GM13977 (cell line): ENCODE measurements at regions of chr12 and their contacts with region 1.

Region 1: DNA sequence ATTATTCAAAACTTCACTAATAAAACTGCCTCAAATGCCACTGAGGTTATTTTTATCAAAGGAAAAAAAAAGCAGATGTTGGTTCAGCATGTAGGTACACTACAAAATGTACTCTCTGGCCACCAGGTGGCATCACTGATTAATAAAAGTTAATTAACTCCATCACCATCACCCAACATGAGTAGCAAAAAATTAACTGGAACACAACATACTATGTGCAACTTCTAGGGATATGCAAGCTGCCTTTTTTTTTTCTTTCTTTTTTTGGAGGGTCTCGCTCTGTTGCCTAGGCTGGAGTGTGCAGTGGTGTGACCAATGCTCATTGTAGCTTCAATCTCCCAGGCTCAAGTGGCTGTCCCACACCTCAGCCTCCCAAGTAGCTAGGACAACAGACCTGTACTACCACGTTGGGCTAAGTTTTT is 43.8 kb upstream of the NR2C1 start:
- DNase-seq: peak; percentile 66
- CTCF ChIP-seq: peak; percentile 58

Region 2: GRCh38 chr12:94603434-94604365 is 513.5 kb before region 1 on chr12:
- in situ Hi-C with region 1: no loop called
- DNase-seq: no peak
- CTCF ChIP-seq: peak; percentile 66

Region 3: GRCh38 chr12:94795520-94795919 is 321.7 kb before region 1 on chr12:
- in situ Hi-C with region 1: no loop called
- DNase-seq: no peak
- CTCF ChIP-seq: no peak

Region 4: GRCh38 chr12:95506707-95507523 is 389.7 kb after region 1 on chr12:
- in situ Hi-C with region 1: loop called (anchors 25 kb)
- DNase-seq: no peak
- CTCF ChIP-seq: no peak